AG04450 (cell line): ENCODE measurements at regions of chr13 and their contacts with region 1.

Region 1: GRCh38 chr13:60226507-60226906 is 62.8 kb upstream of the DIAPH3 start:
- DNase-seq: peak; percentile 8
- H3K4me3 ChIP-seq: no peak overlapping the region
- H3K27ac ChIP-seq: no peak overlapping the region
- H3K27me3 ChIP-seq: peaks cover 6% of the 10 kb centered on the region
- CTCF ChIP-seq: peak; percentile 65

Region 2: GRCh38 chr13:59690857-59691500 is 535.5 kb before region 1 on chr13:
- CTCF ChIA-PET with region 1: interaction called, 10 read pairs
- POLR2A ChIA-PET with region 1: no interaction called
- DNase-seq: no peak
- H3K4me3 ChIP-seq: no peak overlapping the region
- H3K27ac ChIP-seq: no peak overlapping the region
- H3K27me3 ChIP-seq: no peaks in the 10 kb centered on the region
- CTCF ChIP-seq: no peak

Region 3: DNA sequence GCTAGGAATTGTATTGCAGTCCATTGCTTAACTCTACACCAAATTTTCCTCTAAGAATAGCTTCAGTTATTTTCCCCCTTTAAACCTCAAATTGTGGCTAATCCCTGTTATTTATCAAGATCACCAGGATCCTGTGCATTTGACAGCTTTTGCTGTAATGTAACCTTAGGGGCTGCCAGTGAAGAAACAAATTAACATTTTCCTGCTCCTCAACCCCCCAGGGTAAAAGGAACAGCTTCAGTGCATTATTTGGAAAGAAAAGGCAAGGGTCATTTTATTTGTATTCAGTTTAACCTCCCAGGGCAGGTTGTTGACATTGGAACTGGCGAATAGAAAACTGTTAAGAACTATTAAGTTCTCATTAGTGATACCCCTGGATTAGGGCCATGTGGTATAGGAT is 1132.1 kb after region 1 on chr13:
- CTCF ChIA-PET with region 1: no interaction called
- POLR2A ChIA-PET with region 1: no interaction called
- DNase-seq: no peak
- H3K4me3 ChIP-seq: no peak overlapping the region
- H3K27ac ChIP-seq: no peak overlapping the region
- H3K27me3 ChIP-seq: no peaks in the 10 kb centered on the region
- CTCF ChIP-seq: no peak